Heart left ventricle (tissue), 16 donors: ENCODE measurements at regions of chr16 and their contacts with region 1.

Region 1: GRCh38 chr16:56608043-56608875 is at the start of gene MT2A:
- DNase-seq: peak; percentile 93 to 98 (median 96)
- ATAC-seq: peak; percentile 63 to 89 (median 84)
- H3K4me3 ChIP-seq: peak within 1 kb of the TSS; percentile 58 to 87 (median 71)
- H3K27ac ChIP-seq: peak within 1 kb of the TSS; percentile 86 to 99 (median 96)
- H3K4me1 ChIP-seq: peaks cover 9 to 70% (median 57%) of the 10 kb centered on the region in 12 donors
- H3K27me3 ChIP-seq: no peaks in the 10 kb centered on the region
- CTCF ChIP-seq: no peak
- POLR2A ChIP-seq: peak; percentile 67 to 91
- total RNA-seq, gene MT2A: 44.3 to 318 (median 125) TPM

Region 2: GRCh38 chr16:56547120-56547948 is 60.9 kb before region 1 on chr16:
- intact Hi-C with region 1: no loop called
- DNase-seq: no peak
- ATAC-seq: no peak
- H3K4me3 ChIP-seq: no peak overlapping the region
- H3K27ac ChIP-seq: peak overlapping the region in 1 of 12 donors; percentile 47
- H3K4me1 ChIP-seq: peaks cover 2 to 10% (median 7%) of the 10 kb centered on the region in 12 donors
- H3K27me3 ChIP-seq: no peaks in the 10 kb centered on the region
- CTCF ChIP-seq: no peak
- POLR2A ChIP-seq: no peak

Region 3: DNA sequence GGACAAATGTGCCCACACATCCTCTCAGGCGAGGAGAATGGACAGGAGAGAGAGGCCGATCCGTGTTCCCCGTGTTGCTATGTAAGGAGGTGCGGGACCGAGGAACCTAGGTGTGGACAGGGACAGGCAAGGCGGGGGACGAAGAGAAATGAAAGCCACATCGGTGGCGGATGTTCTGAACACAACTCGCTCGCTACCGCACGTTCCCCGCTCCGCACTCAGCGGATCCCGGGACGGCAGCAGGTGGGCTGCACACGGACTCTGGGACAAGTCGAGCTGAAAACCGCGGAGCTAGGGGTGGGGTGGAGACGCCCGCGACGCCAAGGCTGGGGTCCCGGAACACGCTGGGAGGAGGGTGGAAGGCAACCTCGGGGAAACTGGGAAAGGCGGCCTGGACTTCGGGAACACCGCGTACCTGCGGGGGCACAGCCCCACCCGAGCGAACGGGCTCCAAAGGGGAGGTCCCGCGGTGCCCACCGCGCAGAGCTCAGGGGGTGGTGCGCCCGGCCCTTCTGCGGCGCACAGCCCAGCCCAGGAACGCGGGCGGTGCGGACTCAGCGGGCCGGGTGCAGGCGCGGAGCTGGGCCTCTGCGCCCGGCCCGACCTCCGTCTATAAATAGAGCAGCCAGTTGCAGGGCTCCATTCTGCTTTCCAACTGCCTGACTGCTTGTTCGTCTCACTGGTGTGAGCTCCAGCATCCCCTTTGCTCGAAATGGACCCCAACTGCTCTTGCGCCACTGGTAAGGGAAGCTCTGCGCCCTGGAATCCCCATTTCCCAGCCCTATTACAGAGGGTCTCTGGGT is 17.1 kb after region 1 on chr16 and contains the start of gene MT1E:
- intact Hi-C with region 1: loop called in 5 of 10 experiments (anchors 1 to 2 kb)
- DNase-seq: peak; percentile 82 to 90 (median 90)
- ATAC-seq: peak; percentile 88 to 94 (median 91)
- H3K4me3 ChIP-seq: peak within 1 kb of the TSS; percentile 56 to 95 (median 70)
- H3K27ac ChIP-seq: peak within 1 kb of the TSS; percentile 81 to 99 (median 96)
- H3K4me1 ChIP-seq: peaks cover 0 to 30% (median 14%) of the 10 kb centered on the region in 12 donors
- H3K27me3 ChIP-seq: no peaks in the 10 kb centered on the region
- CTCF ChIP-seq: no peak
- POLR2A ChIP-seq: peak in 1 of 2 donors; percentile 90
- total RNA-seq, gene MT1E: 64.8 to 192 (median 103) TPM

Region 4: GRCh38 chr16:56637814-56638750 is 29.8 kb after region 1 on chr16 and contains the start of gene MT1A:
- intact Hi-C with region 1: loop called in 5 of 10 experiments (anchors 2 to 5 kb)
- DNase-seq: peak; percentile 78 to 90 (median 88)
- ATAC-seq: peak; percentile 86 to 93 (median 91)
- H3K4me3 ChIP-seq: peak within 1 kb of the TSS; percentile 22 to 67 (median 58)
- H3K27ac ChIP-seq: peak within 1 kb of the TSS; percentile 17 to 83 (median 57)
- H3K4me1 ChIP-seq: peaks cover 0 to 34% (median 14%) of the 10 kb centered on the region in 12 donors
- H3K27me3 ChIP-seq: peaks cover 0 to 83% (median 31%) of the 10 kb centered on the region in 9 donors
- CTCF ChIP-seq: no peak
- POLR2A ChIP-seq: peak in 1 of 2 donors; percentile 74
- total RNA-seq, gene MT1A: 0.92 to 30.1 (median 3.3) TPM

Region 5: DNA sequence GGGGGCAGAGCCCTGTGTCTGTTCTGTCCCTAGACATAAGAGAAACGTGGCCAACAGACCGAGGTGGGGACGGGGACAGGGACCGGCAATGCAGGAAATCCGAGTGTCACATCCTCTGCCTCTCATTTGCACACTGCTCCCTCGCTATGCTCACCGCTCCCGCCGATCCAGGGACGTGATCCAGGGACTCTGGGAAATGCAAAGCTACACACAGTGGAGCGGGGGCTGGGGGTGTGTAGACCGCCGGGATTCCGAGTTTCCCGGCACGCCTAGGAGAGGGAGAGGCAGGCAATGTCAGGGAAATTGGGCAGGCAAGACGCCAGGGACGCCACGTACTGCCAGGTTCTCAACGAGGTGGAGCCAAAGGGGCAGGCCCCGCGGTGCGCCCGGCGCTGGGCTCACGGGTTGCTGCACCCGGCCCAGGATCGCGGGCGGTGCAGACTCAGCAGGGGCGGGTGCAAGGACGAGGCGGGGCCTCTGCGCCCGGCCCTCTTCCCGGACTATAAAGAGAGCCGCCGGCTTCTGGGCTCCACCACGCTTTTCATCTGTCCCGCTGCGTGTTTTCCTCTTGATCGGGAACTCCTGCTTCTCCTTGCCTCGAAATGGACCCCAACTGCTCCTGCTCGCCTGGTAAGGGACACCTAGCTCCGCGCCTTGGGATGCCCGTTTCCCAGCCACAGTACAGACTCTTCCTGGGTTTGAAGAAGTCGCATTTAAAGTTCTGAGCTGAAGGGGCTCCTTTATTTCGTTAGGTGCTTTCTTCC is 73.9 kb after region 1 on chr16 and contains the start of gene MT1X:
- intact Hi-C with region 1: loop called in 8 of 10 experiments (anchors 1 to 5 kb)
- DNase-seq: peak; percentile 90 to 96 (median 96)
- ATAC-seq: peak; percentile 95 to 98 (median 97)
- H3K4me3 ChIP-seq: peak within 1 kb of the TSS; percentile 27 to 69 (median 62)
- H3K27ac ChIP-seq: peak within 1 kb of the TSS; percentile 70 to 88 (median 84)
- H3K4me1 ChIP-seq: peaks cover 0 to 51% (median 23%) of the 10 kb centered on the region in 12 donors
- H3K27me3 ChIP-seq: no peaks in the 10 kb centered on the region
- CTCF ChIP-seq: no peak
- POLR2A ChIP-seq: peak; percentile 69 to 97
- total RNA-seq, gene MT1X: 20.6 to 918 (median 77.7) TPM

Region 6: GRCh38 chr16:56789360-56789759 is 181.1 kb after region 1 on chr16:
- intact Hi-C with region 1: loop called in 1 of 10 experiments (anchors 10 kb)
- DNase-seq: peak in 4 of 5 donors; percentile 12 to 45 (median 26)
- ATAC-seq: peak; percentile 65 to 81 (median 68)
- H3K4me3 ChIP-seq: no peak overlapping the region
- H3K27ac ChIP-seq: no peak overlapping the region
- H3K4me1 ChIP-seq: peaks cover 0 to 4% (median 0%) of the 10 kb centered on the region in 12 donors
- H3K27me3 ChIP-seq: no peaks in the 10 kb centered on the region
- CTCF ChIP-seq: peak in 11 of 12 donors; percentile 16 to 55 (median 35)
- POLR2A ChIP-seq: no peak